Activated naive CD4-positive, alpha-beta T cell treated with anti-CD3 and anti-CD28 coated beads for 36 hours (primary cell): ENCODE measurements at regions of chr22 and their contacts with region 1.

Region 1: DNA sequence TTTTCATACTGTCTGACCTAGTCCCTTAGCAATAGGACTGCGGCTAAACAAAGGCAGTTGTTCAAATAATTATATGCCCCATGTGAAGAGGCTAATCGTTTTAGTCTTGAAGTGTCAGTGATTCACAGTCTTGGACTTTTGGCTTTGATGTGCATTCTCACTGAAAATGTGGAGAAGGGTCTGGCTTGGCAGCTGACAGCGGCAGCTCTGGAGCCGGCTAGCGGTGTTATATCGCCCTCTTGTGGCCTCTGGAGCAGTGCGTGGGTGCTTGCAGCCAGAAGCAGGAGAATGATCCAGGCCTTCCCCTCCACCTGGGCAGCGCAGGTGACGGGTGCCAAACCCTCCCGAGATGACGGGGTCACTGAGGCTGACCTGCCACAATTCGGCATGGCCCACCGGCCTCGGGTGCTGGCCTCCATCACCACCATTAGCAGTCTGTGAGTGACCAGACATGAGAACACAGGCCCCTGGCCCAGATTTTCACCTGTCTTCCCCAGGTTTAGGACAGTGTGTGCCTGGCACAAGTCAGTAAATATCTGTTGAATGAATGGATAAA is 90.3 kb upstream of the PITPNB start:
- DNase-seq: peak; percentile 85
- H3K4me3 Mint-ChIP-seq: no peak overlapping the region
- H3K27ac Mint-ChIP-seq: no peak overlapping the region
- H3K4me1 Mint-ChIP-seq: no peaks in the 10 kb centered on the region
- H3K27me3 Mint-ChIP-seq: no peaks in the 10 kb centered on the region

Region 2: DNA sequence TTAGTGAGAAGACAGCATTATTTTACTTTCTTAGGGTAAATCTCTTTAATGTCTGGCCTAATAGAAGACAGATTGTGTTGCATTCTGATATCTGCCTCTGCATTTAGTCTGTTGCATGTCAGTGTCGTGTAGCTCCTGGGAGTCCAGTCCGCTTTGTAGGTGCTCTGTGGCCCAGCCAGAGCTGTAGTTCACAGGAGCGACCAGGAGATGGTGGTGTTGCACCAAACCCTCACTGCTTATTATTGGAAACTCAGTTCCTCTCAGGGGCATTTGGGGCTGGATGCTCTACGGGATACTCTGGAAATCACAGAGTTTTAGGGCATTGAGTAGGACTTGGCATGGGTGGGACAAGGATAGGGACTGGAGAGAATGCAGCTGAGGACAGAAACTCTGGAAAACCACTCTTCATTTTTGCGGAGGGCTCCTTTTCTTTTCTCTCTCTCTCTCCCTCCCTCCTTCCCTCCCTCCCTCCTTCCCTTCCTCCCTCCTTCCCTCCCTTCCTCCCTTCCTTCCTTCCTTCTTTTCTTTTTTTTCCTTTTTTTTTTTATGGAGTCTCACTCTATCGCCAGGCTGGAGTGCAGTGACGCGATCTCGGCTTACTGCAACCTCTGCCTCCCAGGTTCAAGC is 1330.2 kb before region 1 on chr22:
- CTCF ChIA-PET with region 1: no interaction called
- intact Hi-C with region 1: loop called (anchors 5 kb)
- DNase-seq: peak; percentile 87
- H3K4me3 Mint-ChIP-seq: no peak overlapping the region
- H3K27ac Mint-ChIP-seq: no peak overlapping the region
- H3K4me1 Mint-ChIP-seq: peaks cover 58% of the 10 kb centered on the region
- H3K27me3 Mint-ChIP-seq: no peaks in the 10 kb centered on the region

Region 3: GRCh38 chr22:27880778-27881394 is 128.5 kb before region 1 on chr22:
- CTCF ChIA-PET with region 1: interaction called, 7 read pairs
- intact Hi-C with region 1: loop called (anchors 2 kb)
- DNase-seq: peak; percentile 29
- H3K4me3 Mint-ChIP-seq: no peak overlapping the region
- H3K27ac Mint-ChIP-seq: no peak overlapping the region
- H3K4me1 Mint-ChIP-seq: peaks cover 28% of the 10 kb centered on the region
- H3K27me3 Mint-ChIP-seq: no peaks in the 10 kb centered on the region